Activated CD8-positive, alpha-beta T cell treated with anti-CD3 and anti-CD28 coated beads, Interleukin-2, amount 10 ng/mL, durations not matched to agents 7 days and 5 days (primary cell): ENCODE measurements at regions of chr1 and their contacts with region 1.

Region 1: DNA sequence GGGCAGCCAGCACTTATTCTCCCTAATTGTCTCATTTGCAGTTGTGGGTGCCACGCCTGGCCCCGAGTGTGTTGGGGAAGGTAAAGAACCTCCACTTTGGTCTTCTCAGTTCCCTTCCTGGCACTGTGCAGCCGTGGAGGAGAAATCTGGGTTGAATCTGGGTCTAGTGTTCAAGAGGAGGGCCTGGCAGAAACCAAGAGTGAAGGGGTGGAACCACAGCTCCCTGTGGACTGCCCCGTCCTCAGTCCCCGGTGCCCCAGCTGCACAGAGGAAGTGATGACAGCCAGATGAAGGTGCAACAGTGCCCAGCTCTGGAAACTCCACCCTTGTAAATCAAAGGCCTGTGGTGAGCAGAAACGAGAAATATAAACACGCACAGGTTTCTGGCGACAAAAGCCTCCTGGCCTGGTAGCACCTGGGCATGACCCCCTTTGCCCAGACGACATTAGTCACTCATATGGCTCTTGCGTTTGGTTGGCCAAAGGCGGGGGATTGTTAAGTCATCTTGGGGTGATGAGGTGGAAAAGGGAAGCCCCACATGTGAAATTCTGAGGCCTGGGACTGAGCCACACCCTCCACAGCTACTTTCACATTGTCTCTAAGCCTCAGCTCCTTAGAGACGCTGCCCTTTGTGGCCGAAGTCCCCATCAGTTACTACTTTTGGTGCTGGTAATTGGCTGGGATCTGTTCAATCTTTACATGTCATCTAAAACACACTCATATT is 4.2 kb upstream of the ECE1 start:
- DNase-seq: peak; percentile 91
- ATAC-seq: peak; percentile 78
- H3K4me3 Mint-ChIP-seq: peak overlapping the region; percentile 73
- H3K27ac Mint-ChIP-seq: peak overlapping the region; percentile 99
- H3K4me1 Mint-ChIP-seq: peaks cover 86% of the 10 kb centered on the region
- H3K27me3 Mint-ChIP-seq: no peaks in the 10 kb centered on the region

Region 2: GRCh38 chr1:21255278-21255942 is 39.0 kb before region 1 on chr1:
- CTCF ChIA-PET with region 1: interaction called, 32 read pairs
- POLR2A ChIA-PET with region 1: interaction called, 3 read pairs
- DNase-seq: peak; percentile 87
- ATAC-seq: peak; percentile 79
- H3K4me3 Mint-ChIP-seq: no peak overlapping the region
- H3K27ac Mint-ChIP-seq: no peak overlapping the region
- H3K4me1 Mint-ChIP-seq: peaks cover 36% of the 10 kb centered on the region
- H3K27me3 Mint-ChIP-seq: no peaks in the 10 kb centered on the region

Region 3: DNA sequence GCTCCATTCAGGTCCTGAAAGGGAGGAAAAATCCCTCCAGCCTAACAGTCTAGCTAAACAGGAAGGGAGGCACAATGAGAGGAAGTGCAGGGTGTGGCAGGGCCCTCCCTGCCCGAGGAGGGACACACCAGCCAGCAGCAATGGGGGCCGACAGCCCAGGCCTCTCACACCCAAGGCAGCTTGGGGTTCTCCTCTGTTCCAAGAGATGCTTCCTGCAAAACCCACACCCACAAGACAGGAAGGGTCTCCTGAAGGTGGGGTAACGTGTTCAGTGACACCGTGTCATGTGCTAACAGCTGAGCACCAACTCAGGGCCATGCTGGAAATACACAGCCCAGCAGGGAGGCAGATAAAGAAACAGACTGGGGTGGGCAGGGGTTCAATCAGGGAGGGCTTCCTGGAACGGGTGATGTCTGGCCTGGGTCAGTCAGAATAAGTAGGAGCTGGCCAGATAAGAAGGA is 14.4 kb before region 1 on chr1:
- CTCF ChIA-PET with region 1: interaction called, 13 read pairs
- POLR2A ChIA-PET with region 1: interaction called, 14 read pairs
- DNase-seq: peak; percentile 44
- ATAC-seq: peak; percentile 76
- H3K4me3 Mint-ChIP-seq: peak overlapping the region; percentile 49
- H3K27ac Mint-ChIP-seq: peak overlapping the region; percentile 94
- H3K4me1 Mint-ChIP-seq: peaks cover 48% of the 10 kb centered on the region
- H3K27me3 Mint-ChIP-seq: no peaks in the 10 kb centered on the region

Region 4: DNA sequence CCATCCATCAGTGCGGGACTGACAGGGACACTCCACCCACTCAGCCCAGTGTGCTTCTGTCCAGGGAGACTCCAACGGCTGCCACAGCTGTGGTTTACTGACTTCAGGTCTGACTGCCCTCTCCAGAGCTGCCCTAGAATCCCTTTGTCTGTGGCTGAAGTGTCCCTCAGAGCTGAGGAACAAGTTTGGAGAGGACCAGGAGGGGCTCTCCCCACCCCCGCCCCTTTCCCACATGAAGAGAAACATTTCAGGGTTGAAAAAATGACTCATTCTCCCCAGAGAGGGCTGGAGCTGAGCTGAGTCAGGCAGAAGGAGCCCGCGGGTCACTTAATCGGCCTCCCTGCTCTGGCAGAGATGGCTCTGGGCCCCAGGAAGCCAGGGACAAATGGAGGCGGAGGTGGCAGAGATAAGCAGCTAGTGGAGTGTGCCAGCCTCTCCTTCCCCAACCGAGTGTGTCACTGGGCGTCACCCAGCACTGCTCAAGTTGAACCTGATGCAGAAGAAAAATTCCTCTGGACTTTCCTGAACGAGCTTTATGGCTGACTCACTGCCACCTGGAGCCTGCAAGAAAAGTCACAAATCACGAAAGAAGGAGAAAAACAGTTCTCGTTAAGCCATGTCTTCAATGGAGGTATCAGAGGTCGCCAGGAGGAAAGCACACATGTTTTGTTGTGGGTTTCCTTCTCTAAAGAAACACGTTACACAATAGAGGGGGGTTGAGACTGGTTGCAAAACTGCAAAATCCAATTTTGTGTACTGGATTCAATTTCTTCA is 30.1 kb after region 1 on chr1:
- CTCF ChIA-PET with region 1: interaction called, 13 read pairs
- POLR2A ChIA-PET with region 1: interaction called, 19 read pairs
- DNase-seq: peak; percentile 61
- ATAC-seq: peak; percentile 72
- H3K4me3 Mint-ChIP-seq: peak overlapping the region; percentile 42
- H3K27ac Mint-ChIP-seq: peak overlapping the region; percentile 75
- H3K4me1 Mint-ChIP-seq: peaks cover 70% of the 10 kb centered on the region
- H3K27me3 Mint-ChIP-seq: no peaks in the 10 kb centered on the region

Region 5: DNA sequence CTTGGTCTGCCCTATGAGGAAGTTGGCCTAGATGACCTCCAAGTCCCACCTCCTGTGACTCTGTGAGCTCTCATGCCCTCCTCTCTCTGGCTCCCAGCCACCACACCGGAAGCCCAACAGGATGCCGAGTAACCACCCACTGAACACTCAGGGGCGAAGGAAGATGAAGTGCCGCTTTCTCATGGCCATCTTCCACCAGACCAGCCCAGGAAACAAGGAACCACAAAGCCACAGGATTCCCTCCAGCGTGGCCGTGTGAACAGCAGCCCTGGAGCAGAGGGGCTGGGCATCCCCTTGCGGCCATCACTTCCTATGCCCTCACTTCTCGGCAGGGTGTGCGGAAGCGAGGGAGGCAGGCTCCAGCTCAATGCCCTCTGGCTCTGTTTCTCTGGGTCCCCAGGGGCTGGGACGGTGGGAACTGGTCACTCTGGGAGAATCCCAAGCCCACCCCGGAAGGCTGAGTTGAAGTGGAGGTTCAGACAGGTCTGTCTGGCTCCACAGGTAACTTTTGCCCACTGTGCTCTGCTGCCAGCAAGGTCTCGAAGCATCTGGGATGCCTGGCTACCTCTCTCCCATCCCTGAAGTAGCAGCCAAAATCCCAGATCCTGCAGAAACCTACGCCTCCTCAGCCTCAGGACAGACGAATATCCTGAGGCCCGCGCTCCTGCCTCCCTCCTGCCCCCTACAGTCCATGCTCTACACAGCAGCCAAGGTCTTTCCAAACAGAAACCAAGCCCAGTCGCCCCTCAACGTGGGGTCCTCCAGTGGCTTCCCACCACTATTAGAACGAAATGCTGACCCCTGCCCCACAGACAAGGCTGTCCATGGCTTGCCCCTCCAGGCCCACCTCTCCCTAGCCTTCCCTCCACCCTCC is 40.0 kb after region 1 on chr1:
- CTCF ChIA-PET with region 1: interaction called, 45 read pairs
- POLR2A ChIA-PET with region 1: interaction called, 20 read pairs
- DNase-seq: peak; percentile 92
- ATAC-seq: peak; percentile 92
- H3K4me3 Mint-ChIP-seq: peak overlapping the region; percentile 75
- H3K27ac Mint-ChIP-seq: peak overlapping the region; percentile 89
- H3K4me1 Mint-ChIP-seq: peaks cover 86% of the 10 kb centered on the region
- H3K27me3 Mint-ChIP-seq: no peaks in the 10 kb centered on the region

Region 6: GRCh38 chr1:21344750-21345443 is 50.5 kb after region 1 on chr1:
- CTCF ChIA-PET with region 1: interaction called, 12 read pairs
- POLR2A ChIA-PET with region 1: interaction called, 57 read pairs
- DNase-seq: peak; percentile 42
- ATAC-seq: peak; percentile 41
- H3K4me3 Mint-ChIP-seq: peak overlapping the region; percentile 87
- H3K27ac Mint-ChIP-seq: peak overlapping the region; percentile 91
- H3K4me1 Mint-ChIP-seq: peaks cover 42% of the 10 kb centered on the region
- H3K27me3 Mint-ChIP-seq: no peaks in the 10 kb centered on the region

Region 7: GRCh38 chr1:21397813-21398188 is 103.4 kb after region 1 on chr1:
- CTCF ChIA-PET with region 1: no interaction called
- POLR2A ChIA-PET with region 1: no interaction called
- DNase-seq: peak; percentile 34
- ATAC-seq: peak; percentile 44
- H3K4me3 Mint-ChIP-seq: peak overlapping the region; percentile 53
- H3K27ac Mint-ChIP-seq: peak overlapping the region; percentile 52
- H3K4me1 Mint-ChIP-seq: peaks cover 13% of the 10 kb centered on the region
- H3K27me3 Mint-ChIP-seq: peaks cover 24% of the 10 kb centered on the region

Region 8: GRCh38 chr1:21647431-21648351 is 353.3 kb after region 1 on chr1:
- CTCF ChIA-PET with region 1: no interaction called
- POLR2A ChIA-PET with region 1: no interaction called
- DNase-seq: peak; percentile 66
- ATAC-seq: peak; percentile 34
- H3K4me3 Mint-ChIP-seq: no peak overlapping the region
- H3K27ac Mint-ChIP-seq: no peak overlapping the region
- H3K4me1 Mint-ChIP-seq: peaks cover 15% of the 10 kb centered on the region
- H3K27me3 Mint-ChIP-seq: peaks cover 21% of the 10 kb centered on the region